Vagina (tissue), 2 donors: ENCODE measurements at regions of chr3 and their contacts with region 1.

Region 1: GRCh38 chr3:13648060-13649001 is 99.4 kb downstream of the FBLN2 start:
- DNase-seq: peak in 1 of 2 donors; percentile 92
- H3K4me3 ChIP-seq: no peak overlapping the region
- H3K27ac ChIP-seq: peak overlapping the region; percentile 54
- H3K4me1 ChIP-seq: peaks cover 17% of the 10 kb centered on the region
- H3K27me3 ChIP-seq: no peaks in the 10 kb centered on the region
- CTCF ChIP-seq: peak; percentile 93 to 98 (median 98)
- POLR2A ChIP-seq: no peak

Region 2: GRCh38 chr3:13083898-13084297 is 564.4 kb before region 1 on chr3:
- intact Hi-C with region 1: loop called (anchors 5 kb)
- DNase-seq: no peak
- H3K4me3 ChIP-seq: no peak overlapping the region
- H3K27ac ChIP-seq: no peak overlapping the region
- H3K4me1 ChIP-seq: no peaks in the 10 kb centered on the region
- H3K27me3 ChIP-seq: no peaks in the 10 kb centered on the region
- CTCF ChIP-seq: no peak
- POLR2A ChIP-seq: no peak

Region 3: GRCh38 chr3:13495921-13496723 is 152.2 kb before region 1 on chr3:
- intact Hi-C with region 1: loop called (anchors 2 kb)
- DNase-seq: no peak
- H3K4me3 ChIP-seq: no peak overlapping the region
- H3K27ac ChIP-seq: peak overlapping the region; percentile 46
- H3K4me1 ChIP-seq: peaks cover 8% of the 10 kb centered on the region
- H3K27me3 ChIP-seq: no peaks in the 10 kb centered on the region
- CTCF ChIP-seq: peak; percentile 94 to 98 (median 95)
- POLR2A ChIP-seq: no peak